ENCODE measurements at regions of chr1 and their contacts with region 1.

Region 1: DNA sequence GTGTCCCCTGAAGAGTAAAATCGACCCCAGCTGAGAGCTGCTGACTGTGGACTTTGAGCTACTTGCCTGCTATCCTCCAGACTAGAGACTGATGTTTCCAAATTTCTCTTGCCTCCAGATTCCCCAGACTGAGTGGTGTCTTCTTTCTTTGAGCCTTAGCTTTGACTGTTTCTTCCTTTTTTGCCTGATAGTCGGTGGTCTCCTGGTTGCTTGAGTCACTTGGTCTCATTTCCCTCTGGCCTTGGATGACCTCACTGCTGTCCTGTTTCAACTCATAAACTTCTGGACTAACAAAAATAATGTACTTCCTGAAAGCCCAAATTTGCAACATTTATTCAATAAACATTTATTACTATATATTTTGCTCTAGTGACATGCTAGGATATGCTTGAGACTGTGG is 52.9 kb upstream of the DIPK1A start:
- DNase-seq: no peak

Region 2: DNA sequence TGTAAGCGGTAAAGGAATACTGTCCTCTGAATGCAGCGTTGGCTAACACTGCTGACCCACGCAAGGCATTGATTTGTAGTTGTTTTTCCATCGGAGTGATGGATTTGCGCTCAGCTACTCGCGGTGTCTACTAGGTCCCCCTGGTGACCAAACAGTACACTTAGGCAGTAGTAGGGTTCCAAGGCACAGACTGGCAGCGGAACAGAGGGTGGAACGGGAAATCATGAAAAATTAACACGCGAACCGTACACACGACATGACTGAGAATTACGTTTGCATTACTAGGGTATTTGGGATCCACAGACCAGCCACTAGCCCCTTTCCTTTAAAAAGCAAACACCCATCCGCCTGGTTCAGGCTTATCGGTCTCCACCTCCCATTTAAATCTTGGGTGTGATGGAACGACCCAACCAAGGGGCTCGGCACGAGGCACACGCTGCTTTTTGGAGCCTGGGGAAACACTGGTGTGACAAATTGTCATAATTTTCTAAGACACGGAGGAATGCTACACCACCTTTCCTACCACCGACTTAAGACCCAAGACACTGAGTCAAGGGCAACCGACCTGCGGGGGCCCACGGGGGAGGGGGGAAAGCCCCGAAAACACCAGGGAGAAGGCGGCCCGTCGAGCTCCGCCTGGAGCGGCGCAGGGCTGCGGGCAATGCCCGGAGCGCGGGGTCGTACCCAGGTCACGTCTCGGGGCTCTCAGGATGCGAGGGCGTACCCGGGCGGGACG is 53.6 kb before region 1 on chr1:
- in situ Hi-C with region 1: loop called (anchors 5 kb)
- DNase-seq: peak; percentile 93